ENCODE measurements at regions of chr11 and their contacts with region 1.

Region 1: GRCh38 chr11:82959987-82960778 is 58.6 kb downstream of the DDIAS start:
- DNase-seq: peak; percentile 65
- ATAC-seq: peak; percentile 82
- H3K4me3 Mint-ChIP-seq: peak overlapping the region; percentile 42
- H3K27ac Mint-ChIP-seq: peak overlapping the region; percentile 62
- H3K4me1 Mint-ChIP-seq: peaks cover 82% of the 10 kb centered on the region
- H3K27me3 Mint-ChIP-seq: no peaks in the 10 kb centered on the region
- CTCF ChIP-seq: no peak

Region 2: GRCh38 chr11:82842019-82842418 is 118.2 kb before region 1 on chr11:
- CTCF ChIA-PET with region 1: no interaction called
- POLR2A ChIA-PET with region 1: no interaction called
- intact Hi-C with region 1: no loop called
- DNase-seq: no peak
- ATAC-seq: no peak
- H3K4me3 Mint-ChIP-seq: no peak overlapping the region
- H3K27ac Mint-ChIP-seq: no peak overlapping the region
- H3K4me1 Mint-ChIP-seq: peaks cover 2% of the 10 kb centered on the region
- H3K27me3 Mint-ChIP-seq: no peaks in the 10 kb centered on the region
- CTCF ChIP-seq: no peak

Region 3: DNA sequence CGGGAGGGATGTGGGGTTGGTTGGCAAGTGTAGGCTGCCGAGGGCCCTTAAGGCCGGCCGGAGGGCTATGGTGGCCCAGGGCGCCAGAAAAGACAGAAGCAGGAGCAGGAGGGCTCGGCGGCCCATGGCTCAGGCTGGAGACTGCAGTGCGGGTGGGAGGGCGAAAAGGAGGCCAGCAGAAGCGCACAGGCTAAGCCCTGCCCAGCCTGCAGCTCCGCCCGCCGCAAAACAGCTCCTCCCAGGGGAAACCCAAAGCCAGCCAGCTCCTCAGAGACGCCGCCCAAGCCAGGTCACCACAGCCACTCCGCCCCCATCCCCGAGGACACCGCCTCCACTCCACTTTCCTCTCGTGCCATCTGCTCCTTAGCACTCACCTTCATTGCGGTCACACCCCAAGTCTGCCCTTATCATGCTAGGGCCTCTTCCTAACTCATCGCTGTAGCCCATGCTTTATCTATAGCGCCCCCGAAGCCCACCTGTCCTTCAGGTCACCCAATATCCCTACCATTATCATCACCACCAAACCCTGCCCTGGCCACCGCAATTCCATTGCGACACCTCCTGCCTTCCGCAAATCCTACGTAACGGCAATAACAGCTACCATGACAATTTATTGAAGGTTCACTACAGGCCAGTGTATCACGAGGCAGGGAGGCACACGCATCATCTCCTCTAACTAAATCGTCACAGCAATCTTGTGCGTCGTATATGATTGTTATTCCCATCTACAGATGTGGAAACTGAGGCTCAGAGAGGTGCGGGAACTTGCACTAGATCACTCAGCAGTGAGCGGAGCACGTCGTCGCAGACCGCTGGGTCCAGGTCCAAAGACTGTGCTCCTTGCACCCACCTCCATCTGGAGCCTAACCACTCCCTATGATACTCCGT is 59.7 kb before region 1 on chr11 and contains the start of gene PRCP:
- CTCF ChIA-PET with region 1: interaction called, 3 read pairs
- POLR2A ChIA-PET with region 1: interaction called, 15 read pairs
- intact Hi-C with region 1: no loop called
- DNase-seq: peak; percentile 98
- ATAC-seq: peak; percentile 80
- H3K4me3 Mint-ChIP-seq: peak within 1 kb of the TSS; percentile 79
- H3K27ac Mint-ChIP-seq: peak within 1 kb of the TSS; percentile 98
- H3K4me1 Mint-ChIP-seq: peaks cover 56% of the 10 kb centered on the region
- H3K27me3 Mint-ChIP-seq: no peaks in the 10 kb centered on the region
- CTCF ChIP-seq: no peak
- total RNA-seq, gene PRCP: 21.8 to 29.9 TPM

Region 4: GRCh38 chr11:82976786-82977185 is 16.6 kb after region 1 on chr11:
- CTCF ChIA-PET with region 1: interaction called, 5 read pairs
- POLR2A ChIA-PET with region 1: no interaction called
- intact Hi-C with region 1: loop called (anchors 2 kb)
- DNase-seq: no peak
- ATAC-seq: no peak
- H3K4me3 Mint-ChIP-seq: no peak overlapping the region
- H3K27ac Mint-ChIP-seq: no peak overlapping the region
- H3K4me1 Mint-ChIP-seq: peaks cover 57% of the 10 kb centered on the region
- H3K27me3 Mint-ChIP-seq: no peaks in the 10 kb centered on the region
- CTCF ChIP-seq: no peak

Region 5: DNA sequence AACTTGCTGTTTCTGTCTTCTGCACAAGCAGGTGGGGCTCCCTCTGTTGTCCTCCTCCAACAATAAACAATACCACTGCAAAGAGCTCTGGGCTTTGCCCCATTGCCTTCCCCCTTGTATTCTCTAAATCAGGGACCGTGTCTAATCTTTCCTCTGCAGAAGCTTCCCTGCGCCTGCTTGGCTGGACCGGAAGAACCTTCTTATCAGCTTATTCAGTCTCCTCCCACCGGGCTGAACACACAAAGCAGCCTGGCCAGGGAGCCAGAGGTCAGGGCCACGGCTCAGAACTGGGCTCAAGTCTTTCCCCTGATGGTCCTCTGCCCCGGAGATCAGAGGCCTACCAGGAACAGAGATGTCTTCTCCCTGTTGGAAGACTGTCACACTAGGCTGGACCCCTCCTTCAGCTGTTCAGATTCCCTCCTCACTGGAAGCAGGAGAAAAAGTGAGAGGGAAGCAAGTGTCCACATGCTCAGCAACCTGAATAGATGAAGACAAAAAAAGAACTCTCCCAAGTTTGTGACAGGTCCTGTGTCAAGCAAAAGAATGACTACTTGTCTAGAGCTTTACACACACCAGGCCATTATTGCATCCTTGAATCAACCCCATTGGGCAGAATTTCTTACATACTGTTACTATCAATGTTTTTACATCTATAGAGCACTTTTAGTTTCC is 47.9 kb after region 1 on chr11:
- CTCF ChIA-PET with region 1: no interaction called
- POLR2A ChIA-PET with region 1: interaction called, 3 read pairs
- intact Hi-C with region 1: loop called (anchors 5 kb)
- DNase-seq: peak; percentile 15
- ATAC-seq: no peak
- H3K4me3 Mint-ChIP-seq: no peak overlapping the region
- H3K27ac Mint-ChIP-seq: peak overlapping the region; percentile 48
- H3K4me1 Mint-ChIP-seq: peaks cover 67% of the 10 kb centered on the region
- H3K27me3 Mint-ChIP-seq: no peaks in the 10 kb centered on the region
- CTCF ChIP-seq: no peak